GM12878 (cell line): ENCODE measurements at regions of chr1 and their contacts with region 1.

Region 1: GRCh38 chr1:42576935-42577334 is 81.3 kb upstream of the PPIH start:
- DNase-seq: no peak
- ATAC-seq: no peak
- H3K4me3 ChIP-seq: no peak overlapping the region
- H3K27ac ChIP-seq: no peak overlapping the region
- H3K4me1 ChIP-seq: no peaks in the 10 kb centered on the region
- H3K27me3 ChIP-seq: no peaks in the 10 kb centered on the region
- CTCF ChIP-seq: no peak
- EP300 ChIP-seq: no peak
- POLR2A ChIP-seq: no peak
- RAD21 ChIP-seq: no peak

Region 2: GRCh38 chr1:42368096-42368795 is 208.7 kb before region 1 on chr1:
- CTCF ChIA-PET with region 1: no interaction called
- POLR2A ChIA-PET with region 1: no interaction called
- RAD21 ChIA-PET with region 1: no interaction called
- SMC1A ChIA-PET with region 1: no interaction called
- in situ Hi-C with region 1: no loop called
- intact Hi-C with region 1: loop called (anchors 10 kb)
- DNase-seq: no peak
- ATAC-seq: no peak
- H3K4me3 ChIP-seq: no peak overlapping the region
- H3K27ac ChIP-seq: no peak overlapping the region
- H3K4me1 ChIP-seq: no peaks in the 10 kb centered on the region
- H3K27me3 ChIP-seq: peaks cover 2 to 3% of the 10 kb centered on the region in 2 experiments; a peak in 2 of 4 replicates
- CTCF ChIP-seq: no peak
- EP300 ChIP-seq: no peak
- POLR2A ChIP-seq: no peak
- RAD21 ChIP-seq: no peak

Region 3: GRCh38 chr1:42479599-42479998 is 97.3 kb before region 1 on chr1:
- CTCF ChIA-PET with region 1: no interaction called
- POLR2A ChIA-PET with region 1: no interaction called
- RAD21 ChIA-PET with region 1: no interaction called
- SMC1A ChIA-PET with region 1: no interaction called
- in situ Hi-C with region 1: no loop called
- intact Hi-C with region 1: no loop called
- DNase-seq: no peak
- ATAC-seq: peak; percentile 82
- H3K4me3 ChIP-seq: no peak overlapping the region
- H3K27ac ChIP-seq: no peak overlapping the region
- H3K4me1 ChIP-seq: no peaks in the 10 kb centered on the region
- H3K27me3 ChIP-seq: no peaks in the 10 kb centered on the region
- CTCF ChIP-seq: peak; percentile 7 to 35 (median 25); a peak in 2 of 6 replicates
- EP300 ChIP-seq: no peak
- POLR2A ChIP-seq: no peak
- RAD21 ChIP-seq: no peak

Region 4: GRCh38 chr1:42690477-42691156 is 113.7 kb after region 1 on chr1:
- CTCF ChIA-PET with region 1: interaction called, 12 read pairs
- POLR2A ChIA-PET with region 1: no interaction called
- RAD21 ChIA-PET with region 1: interaction called, 3 read pairs
- SMC1A ChIA-PET with region 1: interaction called, 6 read pairs
- in situ Hi-C with region 1: no loop called
- intact Hi-C with region 1: no loop called
- DNase-seq: no peak
- ATAC-seq: peak; percentile 45
- H3K4me3 ChIP-seq: peak overlapping the region; percentile 30; the same call in 1 of the 2 replicates
- H3K27ac ChIP-seq: no peak overlapping the region
- H3K4me1 ChIP-seq: peaks cover 14% of the 10 kb centered on the region
- H3K27me3 ChIP-seq: no peaks in the 10 kb centered on the region
- CTCF ChIP-seq: peak; percentile 22 to 36 (median 26); a peak in 4 of 6 replicates
- EP300 ChIP-seq: no peak
- POLR2A ChIP-seq: no peak
- RAD21 ChIP-seq: peak; percentile 39

Region 5: GRCh38 chr1:42747125-42747524 is 170.2 kb after region 1 on chr1:
- CTCF ChIA-PET with region 1: interaction called, 9 read pairs
- POLR2A ChIA-PET with region 1: interaction called, 3 read pairs
- RAD21 ChIA-PET with region 1: no interaction called
- SMC1A ChIA-PET with region 1: interaction called, 4 read pairs
- in situ Hi-C with region 1: no loop called
- intact Hi-C with region 1: loop called (anchors 2 kb)
- DNase-seq: no peak
- ATAC-seq: peak; percentile 74
- H3K4me3 ChIP-seq: no peak overlapping the region
- H3K27ac ChIP-seq: no peak overlapping the region
- H3K4me1 ChIP-seq: no peaks in the 10 kb centered on the region
- H3K27me3 ChIP-seq: no peaks in the 10 kb centered on the region
- CTCF ChIP-seq: peak; percentile 65 to 69 (median 67)
- EP300 ChIP-seq: no peak
- POLR2A ChIP-seq: no peak
- RAD21 ChIP-seq: peak; percentile 66

Region 6: DNA sequence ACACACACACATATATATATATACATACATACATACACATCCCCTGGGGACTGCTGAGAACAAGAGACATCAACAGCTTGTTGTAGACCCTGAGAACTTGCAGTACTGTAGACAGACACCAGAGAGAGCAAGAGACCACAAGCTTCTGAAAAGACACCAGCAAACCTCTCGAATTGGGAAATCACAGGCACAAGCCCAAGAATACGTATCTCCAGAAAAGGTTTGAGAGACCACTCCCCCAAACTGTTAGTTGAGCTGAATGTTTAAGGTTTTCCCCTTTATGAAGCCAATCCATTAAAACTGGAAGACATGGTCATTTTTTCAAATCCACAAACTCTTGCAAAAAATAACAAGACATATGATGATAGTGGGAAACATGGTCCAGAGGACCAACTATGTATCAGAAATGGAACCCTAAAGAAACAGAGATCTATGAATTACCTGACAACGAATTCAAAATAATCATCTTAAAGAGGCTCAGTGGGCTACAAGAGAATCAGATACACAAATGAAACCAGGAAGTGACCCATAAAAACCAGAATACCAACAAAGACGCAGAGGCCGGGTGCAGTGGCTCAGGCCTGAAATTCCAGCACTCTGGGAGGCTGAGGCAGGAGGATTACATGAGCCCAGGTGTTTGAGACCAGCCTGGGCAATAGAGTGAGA is 336.6 kb after region 1 on chr1:
- CTCF ChIA-PET with region 1: interaction called, 5 read pairs
- POLR2A ChIA-PET with region 1: no interaction called
- RAD21 ChIA-PET with region 1: no interaction called
- SMC1A ChIA-PET with region 1: interaction called, 3 read pairs
- in situ Hi-C with region 1: no loop called
- intact Hi-C with region 1: loop called (anchors 5 kb)
- DNase-seq: peak; percentile 64
- ATAC-seq: peak; percentile 88
- H3K4me3 ChIP-seq: no peak overlapping the region
- H3K27ac ChIP-seq: no peak overlapping the region
- H3K4me1 ChIP-seq: no peaks in the 10 kb centered on the region
- H3K27me3 ChIP-seq: no peaks in the 10 kb centered on the region
- CTCF ChIP-seq: peak; percentile 72 to 76 (median 74)
- EP300 ChIP-seq: no peak
- POLR2A ChIP-seq: no peak
- RAD21 ChIP-seq: peak; percentile 91